ENCODE measurements at regions of chr1 and their contacts with region 1.

Region 1: DNA sequence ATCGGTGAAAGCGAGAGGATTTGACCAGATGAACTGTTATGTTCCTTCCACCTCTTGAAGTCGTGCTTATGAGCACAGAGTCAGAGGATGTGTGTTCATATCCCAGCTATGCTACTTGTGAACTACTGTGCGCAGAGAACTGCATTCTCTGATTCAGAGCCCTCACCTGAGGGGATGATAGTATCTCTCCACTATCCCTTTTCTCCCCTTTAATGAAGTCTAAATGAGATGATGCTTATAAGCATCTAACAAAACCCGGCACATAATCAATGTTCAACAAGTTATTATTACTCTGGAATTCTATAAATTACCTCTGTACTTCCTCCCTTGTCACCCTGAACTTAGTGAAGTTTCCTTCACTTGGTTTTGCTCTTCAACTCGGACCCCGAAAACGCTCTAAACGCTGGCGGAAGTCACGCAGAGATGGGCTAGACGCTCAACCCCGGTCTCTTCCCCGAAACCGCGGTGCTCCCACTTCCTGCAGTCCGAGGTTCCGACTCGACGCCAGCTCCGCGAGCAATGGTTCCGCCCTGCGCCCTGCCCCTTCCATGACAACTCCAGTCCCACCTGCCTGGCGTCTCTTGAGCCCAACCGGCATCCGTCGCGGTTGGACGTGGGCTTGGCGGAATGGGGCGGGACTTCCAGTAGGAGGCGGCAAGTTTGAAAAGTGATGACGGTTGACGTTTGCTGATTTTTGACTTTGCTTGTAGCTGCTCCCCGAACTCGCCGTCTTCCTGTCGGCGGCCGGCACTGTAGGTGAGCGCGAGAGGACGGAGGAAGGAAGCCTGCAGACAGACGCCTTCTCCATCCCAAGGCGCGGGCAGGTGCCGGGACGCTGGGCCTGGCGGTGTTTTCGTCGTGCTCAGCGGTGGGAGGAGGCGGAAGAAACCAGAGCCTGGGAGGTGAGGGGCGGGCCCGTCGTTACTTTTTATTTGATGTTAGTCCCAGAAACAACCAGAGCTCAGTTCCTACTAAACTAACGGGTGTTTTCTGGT is at the start of gene NUF2:
- H3K4me3 ChIP-seq: peak within 1 kb of the TSS; percentile 79
- H3K27ac ChIP-seq: peak within 1 kb of the TSS; percentile 82
- H3K4me1 ChIP-seq: no peaks in the 10 kb centered on the region
- CTCF ChIP-seq: no peak; the same call in none of the 2 replicates

Region 2: DNA sequence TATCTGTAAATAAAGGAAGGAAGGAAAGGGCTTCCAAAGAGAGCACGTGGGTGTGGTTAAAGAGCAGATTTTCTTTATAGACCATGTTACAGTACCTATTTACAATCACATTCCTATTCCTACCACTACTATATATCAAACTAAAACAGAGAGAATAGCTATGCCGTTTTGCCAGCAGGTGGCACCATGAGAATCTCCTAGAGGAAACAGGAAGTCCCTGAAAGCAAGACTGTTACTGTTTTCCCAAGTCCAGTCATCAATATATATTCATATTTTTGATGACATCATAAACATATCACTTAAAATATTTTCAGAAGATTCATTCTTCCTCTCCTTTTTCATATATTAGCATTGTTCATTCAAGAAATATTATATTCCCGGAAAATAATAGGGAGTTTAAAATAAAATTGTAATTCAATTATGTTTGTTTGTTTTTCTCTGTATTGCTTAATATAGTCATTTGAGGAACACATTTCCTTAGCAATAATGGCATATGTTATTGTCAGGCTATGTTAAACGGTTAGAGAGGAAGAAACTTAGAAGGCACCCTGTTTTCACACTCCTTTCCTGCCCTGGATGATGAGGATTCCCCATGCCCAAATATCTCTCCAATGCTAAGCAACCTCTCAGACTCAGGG is 467.2 kb before region 1 on chr1:
- CTCF ChIA-PET with region 1: interaction called, 39 read pairs
- POLR2A ChIA-PET with region 1: no interaction called
- H3K4me3 ChIP-seq: no peak overlapping the region
- H3K27ac ChIP-seq: no peak overlapping the region
- H3K4me1 ChIP-seq: peaks cover 7% of the 10 kb centered on the region; the same call in 1 of the 2 replicates
- CTCF ChIP-seq: peak; percentile 36; the same call in 1 of the 2 replicates